ENCODE measurements at regions of chr3 and their contacts with region 1.

Region 1: GRCh38 chr3:179933080-179933479 is 103.7 kb downstream of the PEX5L start:
- DNase-seq: no peak

Region 2: GRCh38 chr3:180176059-180176458 is 243.0 kb after region 1 on chr3:
- intact Hi-C with region 1: loop called (anchors 10 kb)
- DNase-seq: no peak

Region 3: DNA sequence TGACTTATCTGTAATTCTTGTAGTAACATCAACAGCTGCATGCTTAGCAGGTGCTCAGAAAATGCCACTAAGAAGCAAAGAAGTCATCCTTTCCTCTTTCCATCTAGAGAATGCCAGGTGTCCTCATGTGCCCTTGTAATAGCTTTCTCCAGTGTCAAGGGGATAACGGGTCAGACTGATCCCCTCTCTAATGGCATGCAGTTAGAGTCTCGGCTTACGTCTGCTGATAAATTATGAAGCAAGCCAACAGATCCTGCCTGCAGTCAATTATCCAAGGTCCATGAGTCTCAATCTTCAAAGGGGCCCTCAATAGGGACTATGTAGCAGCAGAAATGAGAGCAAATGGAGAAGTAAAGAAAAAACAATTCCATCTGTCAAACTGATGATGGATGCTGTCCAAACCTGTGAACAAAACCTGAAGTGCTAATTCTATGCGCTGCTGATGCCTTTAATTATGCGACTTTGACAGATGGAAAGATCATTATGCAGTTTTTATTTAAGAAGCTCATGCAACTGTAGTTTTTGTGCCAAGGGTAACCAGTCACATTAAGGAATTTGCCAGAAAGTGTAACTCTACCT is 266.4 kb after region 1 on chr3:
- intact Hi-C with region 1: no loop called
- DNase-seq: no peak

Measured in cardiac septum (tissue), 1 donor.